AG04449 (cell line): ENCODE measurements at regions of chr12 and their contacts with region 1.

Region 1: DNA sequence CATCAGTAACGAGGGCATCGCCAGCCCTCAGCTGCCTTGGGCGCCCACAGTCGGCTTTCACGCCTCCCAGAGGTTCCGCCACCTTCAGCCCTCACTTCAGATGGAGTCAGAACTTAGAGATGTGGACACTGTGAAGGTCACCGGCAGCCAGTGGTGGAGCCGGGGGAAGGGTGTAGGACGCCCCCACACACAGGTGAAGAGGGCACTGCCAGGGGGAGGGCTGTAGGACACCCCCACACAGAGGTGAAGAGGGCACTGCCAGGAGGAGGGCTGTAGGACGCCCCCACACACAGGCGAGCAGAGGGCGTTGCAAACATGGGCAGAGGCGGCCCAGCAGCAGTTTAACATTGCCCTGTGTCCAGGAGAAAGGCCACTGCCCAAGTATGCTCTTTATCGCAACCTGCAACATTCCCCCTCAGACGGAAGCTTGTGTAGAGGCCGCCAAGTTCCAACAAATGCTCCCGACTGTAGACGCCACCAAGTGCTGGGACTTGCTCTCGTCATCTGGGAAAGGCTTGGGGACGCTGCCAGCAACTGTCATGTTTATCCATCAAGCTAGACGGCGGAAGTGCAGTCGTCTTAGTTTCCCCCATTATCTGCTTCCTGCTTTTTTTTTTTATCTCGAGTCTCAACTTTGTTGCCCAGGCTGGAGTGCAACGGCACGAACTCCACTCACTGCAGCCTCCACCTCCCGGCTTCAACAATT is 4.9 kb upstream of the ANKLE2 start:
- DNase-seq: no peak
- H3K4me3 ChIP-seq: no peak overlapping the region
- CTCF ChIP-seq: no peak

Region 2: GRCh38 chr12:132632501-132633228 is 133.9 kb before region 1 on chr12:
- CTCF ChIA-PET with region 1: no interaction called
- POLR2A ChIA-PET with region 1: no interaction called
- DNase-seq: no peak
- H3K4me3 ChIP-seq: no peak overlapping the region
- CTCF ChIP-seq: no peak

Region 3: DNA sequence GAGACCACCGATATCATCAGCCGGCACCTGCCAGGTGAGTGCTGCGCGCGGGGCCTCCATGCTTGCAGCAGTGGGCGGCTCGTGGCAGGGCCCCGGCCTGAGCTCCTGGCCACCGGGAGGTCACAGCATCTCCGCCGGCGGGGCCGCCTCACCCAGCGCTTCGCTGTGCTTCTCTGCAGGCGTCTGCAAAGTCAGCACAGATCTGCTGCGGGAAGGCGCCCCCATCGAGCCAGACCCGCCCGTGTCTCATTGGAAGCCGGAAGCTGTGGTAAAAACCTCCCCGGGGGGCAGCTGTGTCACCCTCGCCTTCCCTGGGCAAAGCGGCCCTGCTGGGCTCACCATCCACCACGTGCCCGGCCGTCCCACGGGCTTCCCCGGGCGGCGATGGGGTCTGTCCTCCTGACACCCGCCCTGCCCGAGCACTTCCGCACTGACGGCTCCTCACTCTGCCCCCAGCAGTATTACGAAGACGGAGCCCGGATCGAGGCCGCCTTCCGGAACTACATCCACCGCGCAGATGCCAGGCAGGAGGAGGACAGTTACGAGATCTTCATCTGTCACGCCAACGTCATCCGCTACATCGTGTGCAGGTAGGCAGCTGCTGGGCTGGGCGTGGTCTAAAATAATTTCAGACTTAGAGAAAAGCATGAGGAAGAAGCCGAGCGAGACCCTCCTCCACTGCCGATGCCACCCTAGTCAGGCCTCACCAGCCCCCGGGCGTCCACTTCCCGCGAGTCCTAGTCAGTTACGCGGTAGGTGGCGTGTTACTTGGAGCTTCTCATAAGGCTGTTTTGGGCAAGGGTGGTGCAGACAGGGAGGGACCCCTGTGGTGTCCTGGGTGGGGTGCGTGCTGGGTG is 48.8 kb before region 1 on chr12:
- CTCF ChIA-PET with region 1: no interaction called
- POLR2A ChIA-PET with region 1: no interaction called
- DNase-seq: no peak
- H3K4me3 ChIP-seq: no peak overlapping the region
- CTCF ChIP-seq: no peak

Region 4: GRCh38 chr12:132776816-132777568 is 10.5 kb after region 1 on chr12:
- CTCF ChIA-PET with region 1: interaction called, 18 read pairs
- POLR2A ChIA-PET with region 1: no interaction called
- DNase-seq: no peak
- H3K4me3 ChIP-seq: no peak overlapping the region
- CTCF ChIP-seq: no peak

Region 5: GRCh38 chr12:132807295-132808092 is 41.0 kb after region 1 on chr12:
- CTCF ChIA-PET with region 1: no interaction called
- POLR2A ChIA-PET with region 1: no interaction called
- DNase-seq: no peak
- H3K4me3 ChIP-seq: no peak overlapping the region
- CTCF ChIP-seq: no peak